OCI-LY7 (cell line): ENCODE measurements at regions of chr4 and their contacts with region 1.

Region 1: DNA sequence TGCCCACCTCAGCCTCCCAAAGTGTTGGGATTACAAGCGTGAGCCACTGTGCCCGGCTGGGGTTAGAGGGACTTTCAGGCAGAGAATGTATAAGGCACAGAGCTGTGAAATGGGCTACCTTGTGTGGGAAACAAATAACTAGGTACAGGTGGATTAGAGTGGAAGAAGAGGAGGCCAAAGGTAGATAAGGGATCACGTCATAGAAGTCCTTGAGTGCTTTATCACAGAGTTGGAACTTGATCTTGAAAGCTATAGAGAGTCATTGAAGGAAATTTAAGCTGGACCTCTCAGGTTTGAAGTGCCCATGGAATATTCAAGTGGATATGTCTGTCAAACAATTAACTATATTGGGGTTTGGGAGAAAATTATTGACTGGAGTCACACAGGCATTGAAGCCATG is 8.4 kb downstream of the N4BP2 start:
- DNase-seq: no peak
- H3K4me3 ChIP-seq: no peak overlapping the region
- H3K27ac ChIP-seq: no peak overlapping the region
- H3K4me1 ChIP-seq: no peaks in the 10 kb centered on the region
- CTCF ChIP-seq: no peak

Region 2: DNA sequence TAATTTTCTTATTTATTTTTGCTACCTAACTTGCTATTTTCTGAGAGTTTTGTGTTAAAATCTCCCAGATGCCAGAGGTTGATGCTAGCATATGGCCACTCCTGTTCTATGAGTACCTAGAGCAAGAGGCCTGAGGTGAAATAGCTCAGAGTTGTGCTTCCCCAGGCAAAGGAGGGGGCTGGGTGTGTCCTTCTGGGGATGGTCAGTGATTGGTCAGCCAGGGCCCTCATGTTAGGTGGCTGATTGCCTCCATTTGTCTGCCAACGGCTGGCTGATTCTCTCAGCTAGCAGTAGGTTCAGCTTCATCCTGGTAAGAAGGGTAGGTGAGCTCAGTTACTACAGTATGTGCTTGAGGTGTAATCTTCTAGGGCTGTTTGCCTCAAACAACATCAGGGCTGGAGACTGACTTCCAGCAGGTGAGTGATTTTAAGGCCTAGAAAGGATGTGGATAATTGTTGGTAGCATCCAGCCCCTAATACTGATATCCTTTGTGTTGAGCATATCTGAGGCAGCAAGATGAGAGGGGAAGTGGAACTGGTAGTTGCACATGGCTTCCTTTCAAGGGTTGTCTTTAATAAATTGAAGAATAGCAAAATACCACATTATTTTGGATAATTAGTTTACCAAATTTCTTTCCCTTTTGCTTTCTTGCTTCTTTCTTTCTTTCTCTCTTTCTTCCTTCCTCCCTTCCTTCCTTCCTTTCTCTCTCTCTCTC is 69.3 kb after region 1 on chr4:
- CTCF ChIA-PET with region 1: no interaction called
- POLR2A ChIA-PET with region 1: no interaction called
- intact Hi-C with region 1: loop called (anchors 5 kb)
- DNase-seq: peak; percentile 7
- H3K4me3 ChIP-seq: no peak overlapping the region
- H3K27ac ChIP-seq: no peak overlapping the region
- H3K4me1 ChIP-seq: no peaks in the 10 kb centered on the region
- CTCF ChIP-seq: no peak

Region 3: GRCh38 chr4:40199999-40200874 is 135.2 kb after region 1 on chr4:
- CTCF ChIA-PET with region 1: no interaction called
- POLR2A ChIA-PET with region 1: no interaction called
- intact Hi-C with region 1: no loop called
- DNase-seq: peak; percentile 83
- H3K4me3 ChIP-seq: peak overlapping the region; percentile 79
- H3K27ac ChIP-seq: peak overlapping the region; percentile 93
- H3K4me1 ChIP-seq: peaks cover 51% of the 10 kb centered on the region
- CTCF ChIP-seq: no peak